WTC11 (cell line): ENCODE measurements at regions of chr16 and their contacts with region 1.

Region 1: DNA sequence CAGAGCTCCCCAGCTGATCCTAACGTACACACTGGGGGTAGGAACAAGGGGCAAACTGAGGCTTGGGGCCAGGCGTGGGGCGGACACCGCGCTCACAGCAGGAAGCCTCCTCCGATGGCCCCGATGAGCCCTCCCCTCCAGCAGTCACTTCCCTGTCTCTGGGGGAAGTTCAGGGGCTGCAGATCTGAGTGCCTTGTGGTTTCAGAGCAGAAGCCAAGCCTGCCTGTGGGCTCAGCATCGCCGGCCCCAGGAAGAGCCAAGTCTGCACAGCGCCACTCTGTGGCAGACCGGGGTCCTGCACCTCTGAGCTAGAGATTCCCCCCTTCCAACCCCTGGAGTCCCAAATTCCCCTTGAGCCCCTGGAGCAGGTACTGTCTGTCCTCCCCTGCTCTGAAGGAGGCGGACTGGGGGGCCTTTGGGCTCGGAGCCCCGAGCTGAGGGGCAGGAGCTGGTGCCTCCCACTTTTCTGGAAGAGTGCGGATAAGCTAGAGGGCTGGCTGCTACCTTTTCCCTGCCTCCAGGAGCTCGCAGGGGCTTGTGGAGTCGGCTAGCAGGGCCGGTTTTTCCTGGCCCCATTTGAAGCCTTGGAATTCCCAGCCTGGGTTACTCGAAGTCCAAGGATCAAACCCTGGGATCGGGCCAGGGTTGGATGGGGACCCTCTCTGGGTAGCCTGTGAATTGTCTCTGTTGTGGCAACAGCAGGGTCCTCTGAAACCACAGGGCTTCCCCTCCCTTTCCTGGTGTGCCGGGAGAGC is 2.9 kb downstream of the GSE1 start:
- DNase-seq: peak; percentile 92
- ATAC-seq: peak; percentile 23
- H3K4me3 Mint-ChIP-seq: peak overlapping the region; percentile 64
- H3K27ac Mint-ChIP-seq: no peak overlapping the region; the same call in 1 of the 2 replicates
- H3K4me1 Mint-ChIP-seq: peaks cover 50% of the 10 kb centered on the region
- H3K27me3 Mint-ChIP-seq: no peaks in the 10 kb centered on the region
- CTCF ChIP-seq: peak; percentile 97

Region 2: GRCh38 chr16:85347213-85347591 is 268.8 kb before region 1 on chr16:
- CTCF ChIA-PET with region 1: interaction called, 11 read pairs
- POLR2A ChIA-PET with region 1: no interaction called
- DNase-seq: peak; percentile 77
- ATAC-seq: peak; percentile 85
- H3K4me3 Mint-ChIP-seq: no peak overlapping the region
- H3K27ac Mint-ChIP-seq: no peak overlapping the region
- H3K4me1 Mint-ChIP-seq: peaks cover 10% of the 10 kb centered on the region
- H3K27me3 Mint-ChIP-seq: no peaks in the 10 kb centered on the region; the same call in 1 of the 2 replicates
- CTCF ChIP-seq: peak; percentile 63; the same call in 1 of the 2 replicates

Region 3: GRCh38 chr16:85428168-85428898 is 187.7 kb before region 1 on chr16:
- CTCF ChIA-PET with region 1: interaction called, 15 read pairs
- POLR2A ChIA-PET with region 1: no interaction called
- DNase-seq: peak; percentile 63
- ATAC-seq: peak; percentile 59
- H3K4me3 Mint-ChIP-seq: no peak overlapping the region
- H3K27ac Mint-ChIP-seq: no peak overlapping the region
- H3K4me1 Mint-ChIP-seq: peaks cover 7% of the 10 kb centered on the region; the same call in 1 of the 2 replicates
- H3K27me3 Mint-ChIP-seq: no peaks in the 10 kb centered on the region
- CTCF ChIP-seq: peak; percentile 27; the same call in 1 of the 2 replicates

Region 4: DNA sequence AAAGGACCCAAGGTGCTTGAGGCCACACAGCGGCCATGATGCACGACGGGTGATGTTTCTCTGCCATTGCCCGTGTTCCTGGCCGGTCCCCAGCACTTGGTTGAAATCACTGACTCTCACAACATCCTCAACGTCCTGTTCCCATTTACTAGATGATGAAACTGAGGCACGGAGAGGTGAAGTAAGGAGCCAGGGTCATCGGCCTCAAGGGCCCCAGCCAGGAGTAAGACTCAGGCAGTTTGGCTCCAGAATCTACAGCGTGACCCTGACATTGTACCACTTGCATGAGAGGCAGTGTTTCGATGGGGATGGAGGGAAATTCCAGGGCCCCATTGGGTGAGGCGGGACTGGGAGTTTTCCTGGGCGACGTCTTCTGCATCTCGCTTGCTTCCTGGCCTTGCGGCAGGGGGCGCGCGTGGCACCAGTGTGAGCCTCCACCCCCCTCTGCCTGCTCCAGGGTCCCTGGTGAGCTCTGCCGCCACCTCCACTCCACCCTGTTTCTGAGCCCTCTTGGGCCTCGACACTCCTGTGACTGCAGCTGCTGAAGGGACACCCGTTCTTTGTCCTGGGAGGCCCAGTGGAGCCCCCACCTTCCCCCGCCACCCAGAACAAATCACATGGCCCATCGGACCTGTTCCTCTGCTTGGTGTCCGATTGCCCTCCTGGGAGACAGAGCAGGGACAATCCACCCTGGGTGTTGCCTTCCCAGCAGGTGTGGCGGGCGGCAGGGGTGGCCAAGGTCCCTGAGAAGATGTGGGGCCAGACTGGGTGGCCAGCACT is 135.9 kb before region 1 on chr16:
- CTCF ChIA-PET with region 1: interaction called, 11 read pairs
- POLR2A ChIA-PET with region 1: no interaction called
- DNase-seq: peak; percentile 64
- ATAC-seq: peak; percentile 74
- H3K4me3 Mint-ChIP-seq: no peak overlapping the region
- H3K27ac Mint-ChIP-seq: no peak overlapping the region
- H3K4me1 Mint-ChIP-seq: peaks cover 9% of the 10 kb centered on the region
- H3K27me3 Mint-ChIP-seq: no peaks in the 10 kb centered on the region
- CTCF ChIP-seq: no peak

Region 5: GRCh38 chr16:85554112-85554813 is 61.8 kb before region 1 on chr16:
- CTCF ChIA-PET with region 1: interaction called, 160 read pairs
- POLR2A ChIA-PET with region 1: interaction called, 20 read pairs
- DNase-seq: no peak
- ATAC-seq: peak; percentile 4; the same call in 1 of the 2 replicates
- H3K4me3 Mint-ChIP-seq: peak overlapping the region; percentile 89
- H3K27ac Mint-ChIP-seq: peak overlapping the region; percentile 85
- H3K4me1 Mint-ChIP-seq: peaks cover 44% of the 10 kb centered on the region
- H3K27me3 Mint-ChIP-seq: peaks cover 8% of the 10 kb centered on the region
- CTCF ChIP-seq: no peak

Region 6: DNA sequence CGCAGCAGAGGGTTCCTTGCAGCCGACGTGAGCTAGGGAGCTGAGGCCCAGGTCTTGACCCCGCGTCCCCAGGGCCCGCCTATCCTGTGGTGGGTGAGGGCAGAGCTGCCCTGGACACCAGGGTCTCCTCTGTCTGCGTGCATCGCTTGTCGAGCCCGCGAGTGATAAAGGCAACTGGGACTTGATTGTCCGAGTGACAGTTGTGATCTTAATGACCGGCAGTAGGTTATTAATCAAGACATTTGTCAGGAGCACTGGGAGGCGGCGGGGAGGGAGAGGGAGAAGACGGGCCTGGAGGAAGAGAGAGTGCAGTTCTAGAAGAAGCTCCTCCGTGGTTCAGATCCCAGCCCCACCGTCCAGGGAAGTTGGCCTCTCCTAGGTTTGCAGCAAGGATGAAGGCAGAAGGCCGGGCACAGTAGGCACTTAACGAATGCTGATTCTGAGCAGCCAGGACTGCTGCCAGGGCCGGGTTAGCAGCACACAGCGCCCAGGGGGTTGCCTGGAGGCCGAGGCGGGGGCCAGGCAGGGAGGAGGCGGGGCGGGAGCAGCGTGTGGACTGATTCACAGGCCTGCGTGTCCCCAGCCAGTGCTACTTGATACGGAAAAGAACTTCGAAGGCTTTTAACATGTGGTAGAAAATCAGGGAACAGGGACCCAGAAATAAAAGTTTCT is 14.2 kb before region 1 on chr16:
- CTCF ChIA-PET with region 1: interaction called, 49 read pairs
- POLR2A ChIA-PET with region 1: interaction called, 4 read pairs
- DNase-seq: no peak
- ATAC-seq: 0 out of 2 replicates have a peak, but pooled peaks have one; percentile 11
- H3K4me3 Mint-ChIP-seq: peak overlapping the region; percentile 9; the same call in 1 of the 2 replicates
- H3K27ac Mint-ChIP-seq: no peak overlapping the region
- H3K4me1 Mint-ChIP-seq: peaks cover 74% of the 10 kb centered on the region
- H3K27me3 Mint-ChIP-seq: no peaks in the 10 kb centered on the region
- CTCF ChIP-seq: no peak

Region 7: GRCh38 chr16:85650966-85651811 is 35.2 kb after region 1 on chr16:
- CTCF ChIA-PET with region 1: interaction called, 10 read pairs
- POLR2A ChIA-PET with region 1: no interaction called
- DNase-seq: no peak
- ATAC-seq: no peak
- H3K4me3 Mint-ChIP-seq: no peak overlapping the region
- H3K27ac Mint-ChIP-seq: no peak overlapping the region
- H3K4me1 Mint-ChIP-seq: peaks cover 5% of the 10 kb centered on the region; the same call in 1 of the 2 replicates
- H3K27me3 Mint-ChIP-seq: no peaks in the 10 kb centered on the region
- CTCF ChIP-seq: no peak

Region 8: DNA sequence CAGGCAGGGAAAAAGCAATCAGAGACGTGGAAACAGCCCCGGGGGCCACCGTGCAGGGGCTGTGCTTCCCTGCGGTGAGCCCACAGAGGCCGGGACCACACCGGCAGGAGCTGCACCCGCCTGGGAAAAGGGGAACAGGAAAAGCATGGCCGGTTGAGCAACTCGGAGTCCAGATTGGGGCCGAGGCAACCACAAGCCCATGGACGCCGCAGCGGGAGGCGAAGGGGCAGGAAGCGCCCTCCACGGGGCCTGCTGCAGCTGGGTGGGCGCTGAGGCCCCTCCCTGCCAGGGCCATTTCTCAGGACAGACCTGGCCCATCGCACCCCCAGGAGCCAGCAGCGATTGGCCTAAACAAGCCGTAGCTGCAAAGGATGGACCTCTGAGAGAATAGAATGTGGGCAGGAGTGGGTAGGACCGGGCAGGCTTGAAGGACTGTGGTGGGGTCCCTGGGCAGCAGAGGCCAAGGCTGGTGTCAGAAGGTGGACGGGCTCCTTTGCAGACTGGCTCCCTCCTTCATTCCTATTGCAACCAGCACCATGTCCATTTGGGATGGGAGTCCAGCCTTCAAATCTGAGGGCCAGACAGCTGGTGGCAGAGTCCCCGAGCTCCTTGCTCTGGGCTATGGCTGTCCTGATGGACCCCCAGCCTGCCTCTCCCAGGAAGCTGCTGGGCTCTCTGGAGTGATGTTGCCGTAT is 213.9 kb after region 1 on chr16:
- CTCF ChIA-PET with region 1: no interaction called
- POLR2A ChIA-PET with region 1: no interaction called
- DNase-seq: no peak
- ATAC-seq: no peak
- H3K4me3 Mint-ChIP-seq: no peak overlapping the region
- H3K27ac Mint-ChIP-seq: no peak overlapping the region
- H3K4me1 Mint-ChIP-seq: no peaks in the 10 kb centered on the region
- H3K27me3 Mint-ChIP-seq: peaks cover 12% of the 10 kb centered on the region
- CTCF ChIP-seq: no peak